Caco-2 (cell line): ENCODE measurements at regions of chr7 and their contacts with region 1.

Region 1: DNA sequence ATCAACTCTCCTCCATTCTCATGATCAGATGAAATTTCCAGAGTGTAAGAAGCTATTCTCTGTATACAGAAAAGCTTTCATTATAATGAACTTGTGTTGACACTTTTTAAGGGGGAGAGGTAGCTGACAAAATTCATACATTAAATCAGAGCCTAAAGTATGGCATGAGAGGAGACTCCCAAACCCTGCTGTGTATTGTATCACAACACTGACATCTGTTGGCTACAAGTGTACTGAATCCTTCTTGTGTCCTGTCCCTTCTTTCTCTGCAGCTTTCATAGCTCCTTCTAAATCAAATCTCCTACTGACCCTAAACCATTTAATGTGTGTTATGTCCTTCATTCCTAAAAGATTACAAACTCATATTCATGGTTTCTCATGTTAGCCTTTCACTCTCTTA is 70.9 kb downstream of the GCC1 start:
- DNase-seq: peak in 1 of 2 experiments; percentile 36
- H3K4me3 ChIP-seq: no peak overlapping the region
- H3K4me3 Mint-ChIP-seq: no peak overlapping the region
- H3K27ac Mint-ChIP-seq: no peak overlapping the region
- H3K4me1 ChIP-seq: no peaks in the 10 kb centered on the region
- H3K4me1 Mint-ChIP-seq: no peaks in the 10 kb centered on the region
- H3K27me3 ChIP-seq: no peaks in the 10 kb centered on the region
- H3K27me3 Mint-ChIP-seq: peaks cover 19% of the 10 kb centered on the region
- CTCF ChIP-seq: peak; percentile 39 to 50

Region 2: GRCh38 chr7:127107601-127108007 is 406.9 kb before region 1 on chr7:
- CTCF ChIA-PET with region 1: no interaction called
- POLR2A ChIA-PET with region 1: no interaction called
- intact Hi-C with region 1: loop called (anchors 1 kb)
- DNase-seq: peak; percentile 62 to 76
- H3K4me3 ChIP-seq: no peak overlapping the region
- H3K4me3 Mint-ChIP-seq: no peak overlapping the region
- H3K27ac Mint-ChIP-seq: no peak overlapping the region
- H3K4me1 ChIP-seq: no peaks in the 10 kb centered on the region
- H3K4me1 Mint-ChIP-seq: no peaks in the 10 kb centered on the region
- H3K27me3 ChIP-seq: no peaks in the 10 kb centered on the region
- H3K27me3 Mint-ChIP-seq: peaks cover 6% of the 10 kb centered on the region
- CTCF ChIP-seq: peak; percentile 33 to 75

Region 3: DNA sequence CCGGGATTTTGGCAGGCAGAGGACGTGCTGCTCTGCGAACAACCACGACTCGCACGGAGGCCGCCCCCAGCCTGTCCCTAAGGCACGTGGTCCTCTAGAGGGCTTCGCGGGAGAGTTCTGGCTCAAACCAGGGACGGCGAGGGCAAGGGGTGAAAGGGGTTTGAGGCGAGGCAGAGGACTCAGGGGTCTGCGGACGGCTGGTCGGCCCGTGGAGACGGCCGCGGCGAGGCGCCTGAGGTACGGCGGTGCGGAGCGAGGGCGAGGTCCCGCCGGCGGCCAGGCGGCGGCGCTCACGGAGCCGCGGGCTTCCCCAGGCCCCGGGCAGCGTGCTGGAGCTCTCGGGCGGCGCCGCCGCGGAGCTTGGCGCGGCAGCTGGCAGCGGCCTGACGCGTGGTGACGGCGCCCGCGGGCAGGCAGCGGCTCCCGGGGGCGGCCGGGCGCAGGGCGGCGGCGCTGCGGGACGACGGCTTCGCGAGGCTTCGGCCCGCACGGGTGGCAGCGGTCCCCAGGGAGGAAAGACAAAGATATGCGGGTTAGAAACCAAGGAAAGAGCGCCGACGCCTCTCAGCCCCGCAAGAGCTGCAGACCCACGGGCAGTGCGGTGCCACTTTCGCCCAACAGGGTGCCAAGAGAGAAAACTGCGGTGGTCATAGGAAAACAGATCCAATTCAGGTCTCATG is 166.8 kb before region 1 on chr7:
- CTCF ChIA-PET with region 1: interaction called, 3 read pairs
- POLR2A ChIA-PET with region 1: no interaction called
- intact Hi-C with region 1: loop called (anchors 1 kb)
- DNase-seq: peak; percentile 54 to 82
- H3K4me3 ChIP-seq: peak overlapping the region; percentile 31
- H3K4me3 Mint-ChIP-seq: peak overlapping the region; percentile 64
- H3K27ac Mint-ChIP-seq: no peak overlapping the region
- H3K4me1 ChIP-seq: no peaks in the 10 kb centered on the region
- H3K4me1 Mint-ChIP-seq: no peaks in the 10 kb centered on the region
- H3K27me3 ChIP-seq: no peaks in the 10 kb centered on the region
- H3K27me3 Mint-ChIP-seq: peaks cover 13% of the 10 kb centered on the region
- CTCF ChIP-seq: peak; percentile 6 to 13

Region 4: DNA sequence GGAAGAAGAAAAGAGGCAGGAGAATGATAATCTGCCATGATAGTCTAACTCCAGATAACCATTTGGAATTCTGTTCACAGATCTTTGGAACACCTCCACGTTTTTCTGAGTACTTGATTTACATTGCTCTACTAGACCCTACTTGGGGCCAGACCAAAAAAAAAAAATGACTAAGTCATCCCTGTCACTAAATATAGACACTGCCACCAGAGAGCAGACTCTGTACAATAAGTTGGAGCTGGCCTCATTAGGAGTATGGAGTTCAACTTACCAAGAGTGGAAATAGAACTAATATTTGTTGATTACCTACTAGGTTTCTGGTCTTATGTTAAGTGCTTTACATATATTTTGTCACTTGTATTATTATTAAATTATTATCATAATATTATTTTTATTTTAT is 41.1 kb before region 1 on chr7:
- CTCF ChIA-PET with region 1: interaction called, 7 read pairs
- POLR2A ChIA-PET with region 1: no interaction called
- intact Hi-C with region 1: loop called (anchors 1 kb)
- DNase-seq: no peak
- H3K4me3 ChIP-seq: no peak overlapping the region
- H3K4me3 Mint-ChIP-seq: no peak overlapping the region
- H3K27ac Mint-ChIP-seq: no peak overlapping the region
- H3K4me1 ChIP-seq: peaks cover 5% of the 10 kb centered on the region; the same call in 1 of the 2 replicates
- H3K4me1 Mint-ChIP-seq: no peaks in the 10 kb centered on the region
- H3K27me3 ChIP-seq: no peaks in the 10 kb centered on the region
- H3K27me3 Mint-ChIP-seq: peaks cover 14% of the 10 kb centered on the region
- CTCF ChIP-seq: no peak